ENCODE measurements at regions of chr15 and their contacts with region 1.

Region 1: GRCh38 chr15:90931737-90932659 is at the start of gene HDDC3:
- DNase-seq: peak; percentile 80 to 98 (median 88)
- ATAC-seq: peak; percentile 72
- H3K4me3 ChIP-seq: peak within 1 kb of the TSS; percentile 97
- H3K4me3 Mint-ChIP-seq: peak within 1 kb of the TSS; percentile 96 to 100 (median 98)
- H3K27ac ChIP-seq: peak within 1 kb of the TSS; percentile 79
- H3K27ac Mint-ChIP-seq: peak within 1 kb of the TSS; percentile 91 to 99 (median 98)
- H3K4me1 ChIP-seq: peaks cover 33 to 50% of the 10 kb centered on the region in 2 donors
- H3K4me1 Mint-ChIP-seq: peaks cover 36 to 63% (median 53%) of the 10 kb centered on the region in 7 donors
- H3K27me3 ChIP-seq: no peaks in the 10 kb centered on the region
- H3K27me3 Mint-ChIP-seq: no peaks in the 10 kb centered on the region
- total RNA-seq, gene HDDC3: 13.3 to 34.2 (median 29.0) TPM

Region 2: GRCh38 chr15:90265271-90266060 is 666.5 kb before region 1 on chr15 and contains the start of gene NGRN:
- CTCF ChIA-PET with region 1: no interaction called
- POLR2A ChIA-PET with region 1: no interaction called
- intact Hi-C with region 1: loop called in 1 of 2 experiments (anchors 2 kb)
- DNase-seq: peak; percentile 81 to 96 (median 93)
- ATAC-seq: peak; percentile 94
- H3K4me3 ChIP-seq: peak within 1 kb of the TSS; percentile 84
- H3K4me3 Mint-ChIP-seq: peak within 1 kb of the TSS; percentile 95 to 99 (median 97)
- H3K27ac ChIP-seq: peak within 1 kb of the TSS; percentile 96
- H3K27ac Mint-ChIP-seq: peak within 1 kb of the TSS; percentile 98 to 100 (median 99)
- H3K4me1 ChIP-seq: peaks cover 36 to 40% of the 10 kb centered on the region in 2 donors
- H3K4me1 Mint-ChIP-seq: peaks cover 22 to 60% (median 48%) of the 10 kb centered on the region in 7 donors
- H3K27me3 ChIP-seq: no peaks in the 10 kb centered on the region
- H3K27me3 Mint-ChIP-seq: no peaks in the 10 kb centered on the region
- total RNA-seq, gene NGRN: 34.1 to 51.5 (median 48.4) TPM

Region 3: GRCh38 chr15:90716976-90717821 is 214.8 kb before region 1 on chr15 and contains the start of gene BLM:
- CTCF ChIA-PET with region 1: interaction called, 3 read pairs
- POLR2A ChIA-PET with region 1: interaction called, 13 read pairs
- intact Hi-C with region 1: loop called (anchors 1 kb)
- DNase-seq: peak; percentile 83 to 98 (median 96)
- ATAC-seq: peak; percentile 100
- H3K4me3 ChIP-seq: peak within 1 kb of the TSS; percentile 75
- H3K4me3 Mint-ChIP-seq: peak within 1 kb of the TSS; percentile 92 to 98 (median 95)
- H3K27ac ChIP-seq: peak within 1 kb of the TSS; percentile 85
- H3K27ac Mint-ChIP-seq: peak within 1 kb of the TSS; percentile 81 to 97 (median 95)
- H3K4me1 ChIP-seq: peaks cover 5 to 9% of the 10 kb centered on the region in 2 donors
- H3K4me1 Mint-ChIP-seq: peaks cover 20 to 35% (median 30%) of the 10 kb centered on the region in 7 donors
- H3K27me3 ChIP-seq: no peaks in the 10 kb centered on the region
- H3K27me3 Mint-ChIP-seq: no peaks in the 10 kb centered on the region
- total RNA-seq, gene BLM: 3.5 to 53.1 (median 6.6) TPM

Region 4: DNA sequence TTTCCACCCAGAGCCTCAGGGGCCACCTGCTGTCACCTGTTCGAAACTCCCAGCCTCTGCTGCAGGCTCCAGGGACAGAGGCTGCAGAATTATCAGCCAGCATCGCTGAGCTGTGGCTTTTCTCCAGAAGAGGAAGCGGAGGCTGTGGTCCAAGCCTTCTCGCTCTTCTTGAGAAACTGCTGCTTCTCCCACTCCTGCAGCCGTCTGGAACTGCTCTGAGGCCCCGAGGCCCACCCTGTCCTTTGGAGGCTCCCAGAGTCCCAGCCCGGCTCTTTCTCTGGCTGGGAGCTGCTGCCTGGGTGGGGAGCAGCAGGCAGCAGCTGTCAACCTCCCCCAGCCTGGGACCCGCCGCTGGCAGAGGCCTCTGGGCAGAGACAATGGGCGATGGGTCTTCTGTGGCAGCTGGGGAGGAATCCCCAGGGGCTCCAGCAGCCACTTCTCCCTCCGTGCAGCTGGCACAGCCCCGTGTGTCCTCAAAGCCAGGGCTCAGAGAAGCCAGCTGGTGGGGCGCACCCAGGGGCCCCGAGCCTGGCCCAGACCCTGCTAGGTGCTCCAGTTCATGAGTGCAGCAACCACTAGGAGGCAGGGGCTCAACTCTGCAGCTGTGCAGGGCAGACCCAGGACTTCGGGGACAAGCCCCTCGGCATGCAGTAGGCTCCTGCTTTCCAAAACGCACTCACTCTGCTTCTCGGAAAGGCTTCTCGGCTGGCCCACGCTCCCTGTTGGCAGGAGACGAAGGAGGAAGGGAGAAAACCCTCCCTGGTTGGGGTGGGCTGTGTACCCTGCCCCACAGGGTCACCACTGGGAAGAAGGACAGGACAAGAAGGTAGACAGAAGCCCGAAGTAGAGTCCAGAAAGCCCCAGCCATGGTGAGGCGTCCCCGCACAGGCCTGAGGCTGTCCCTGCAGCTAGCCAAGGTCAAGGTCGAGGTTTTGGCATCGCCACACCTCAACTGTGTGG is 113.5 kb before region 1 on chr15:
- CTCF ChIA-PET with region 1: no interaction called
- POLR2A ChIA-PET with region 1: no interaction called
- intact Hi-C with region 1: no loop called
- DNase-seq: peak in 2 of 9 donors; percentile 13 to 21
- ATAC-seq: peak; percentile 68
- H3K4me3 ChIP-seq: no peak overlapping the region
- H3K4me3 Mint-ChIP-seq: peak overlapping the region in 3 of 10 donors; percentile 29 to 79 (median 50)
- H3K27ac ChIP-seq: no peak overlapping the region
- H3K27ac Mint-ChIP-seq: peak overlapping the region in 5 of 9 donors; percentile 31 to 94 (median 55)
- H3K4me1 ChIP-seq: peaks cover 0 to 12% of the 10 kb centered on the region in 2 donors
- H3K4me1 Mint-ChIP-seq: peaks cover 0 to 76% (median 10%) of the 10 kb centered on the region in 7 donors
- H3K27me3 ChIP-seq: no peaks in the 10 kb centered on the region
- H3K27me3 Mint-ChIP-seq: no peaks in the 10 kb centered on the region

Region 5: DNA sequence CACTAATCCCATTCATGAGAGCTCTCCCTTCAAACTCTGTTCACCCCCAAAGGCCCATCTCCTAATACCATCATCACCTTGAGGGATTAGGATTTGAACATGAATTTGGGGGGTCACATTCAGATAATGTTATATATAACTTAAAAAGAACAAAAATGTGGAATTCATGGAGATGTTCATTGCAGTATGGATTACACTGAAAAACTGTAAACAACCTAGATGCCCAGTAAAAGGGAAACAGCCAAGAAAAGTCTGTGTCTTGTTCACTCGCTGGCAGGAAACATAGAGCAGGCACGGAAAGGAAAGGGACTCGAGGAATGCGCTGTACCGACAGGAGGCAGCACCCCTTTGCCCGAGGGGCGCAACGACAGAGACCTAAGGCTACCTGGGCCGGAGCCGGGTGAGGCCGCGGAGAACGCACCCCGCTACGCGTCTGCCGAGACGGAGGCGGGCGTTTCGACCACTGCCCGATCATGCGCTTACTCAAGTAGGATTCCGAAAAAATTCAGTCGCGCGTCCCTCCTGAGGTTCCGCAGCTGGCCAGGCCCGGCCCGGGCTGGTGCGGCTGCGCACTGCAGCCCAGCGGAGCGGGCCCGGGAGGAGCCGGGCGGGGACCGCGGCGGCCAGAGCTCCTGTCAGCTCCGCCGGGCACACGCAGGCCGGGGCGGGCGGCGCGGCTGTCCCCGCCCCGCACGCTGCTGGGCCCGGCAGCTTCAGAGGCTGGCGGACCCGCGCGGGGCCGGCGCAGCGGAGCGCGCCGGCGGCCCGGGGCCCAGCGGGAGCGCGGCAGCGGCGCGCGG is 29.8 kb before region 1 on chr15:
- CTCF ChIA-PET with region 1: interaction called, 150 read pairs
- POLR2A ChIA-PET with region 1: interaction called, 213 read pairs
- intact Hi-C with region 1: loop called (anchors 1 kb)
- DNase-seq: peak; percentile 60 to 81 (median 73)
- ATAC-seq: peak; percentile 84
- H3K4me3 ChIP-seq: peak overlapping the region; percentile 82
- H3K4me3 Mint-ChIP-seq: peak overlapping the region; percentile 85 to 96 (median 90)
- H3K27ac ChIP-seq: peak overlapping the region; percentile 72
- H3K27ac Mint-ChIP-seq: peak overlapping the region; percentile 81 to 95 (median 90)
- H3K4me1 ChIP-seq: peaks cover 12 to 17% of the 10 kb centered on the region in 2 donors
- H3K4me1 Mint-ChIP-seq: peaks cover 11 to 37% (median 34%) of the 10 kb centered on the region in 7 donors
- H3K27me3 ChIP-seq: no peaks in the 10 kb centered on the region
- H3K27me3 Mint-ChIP-seq: no peaks in the 10 kb centered on the region

Region 6: GRCh38 chr15:91022075-91022835 is 90.3 kb after region 1 on chr15 and contains the start of gene VPS33B:
- CTCF ChIA-PET with region 1: interaction called, 7 read pairs
- POLR2A ChIA-PET with region 1: interaction called, 18 read pairs
- intact Hi-C with region 1: loop called in 1 of 2 experiments (anchors 2 kb)
- DNase-seq: peak; percentile 37 to 78 (median 76)
- ATAC-seq: peak; percentile 91
- H3K4me3 ChIP-seq: peak within 1 kb of the TSS; percentile 100
- H3K4me3 Mint-ChIP-seq: peak within 1 kb of the TSS; percentile 87 to 99 (median 96)
- H3K27ac ChIP-seq: peak within 1 kb of the TSS; percentile 82
- H3K27ac Mint-ChIP-seq: peak within 1 kb of the TSS; percentile 79 to 96 (median 94)
- H3K4me1 ChIP-seq: peaks cover 5 to 15% of the 10 kb centered on the region in 2 donors
- H3K4me1 Mint-ChIP-seq: peaks cover 38 to 56% (median 47%) of the 10 kb centered on the region in 7 donors
- H3K27me3 ChIP-seq: no peaks in the 10 kb centered on the region
- H3K27me3 Mint-ChIP-seq: no peaks in the 10 kb centered on the region
- total RNA-seq, gene VPS33B: 15.8 to 28.1 (median 25.7) TPM